ENCODE measurements at regions of chr17 and their contacts with region 1.

Region 1: GRCh38 chr17:17681187-17681848 is at the start of gene RAI1:
- DNase-seq: peak; percentile 64 to 87 (median 79)
- ATAC-seq: peak; percentile 82
- H3K4me3 ChIP-seq: peak within 1 kb of the TSS; percentile 62
- H3K4me3 Mint-ChIP-seq: peak within 1 kb of the TSS; percentile 84 to 92 (median 89)
- H3K27ac ChIP-seq: peak within 1 kb of the TSS; percentile 93
- H3K27ac Mint-ChIP-seq: peak within 1 kb of the TSS in 7 of 9 donors; percentile 59 to 90 (median 77)
- H3K4me1 ChIP-seq: peaks cover 7 to 17% of the 10 kb centered on the region in 2 donors
- H3K4me1 Mint-ChIP-seq: peaks cover 14 to 42% (median 37%) of the 10 kb centered on the region in 7 donors
- H3K27me3 ChIP-seq: no peaks in the 10 kb centered on the region
- H3K27me3 Mint-ChIP-seq: peaks cover 0 to 16% (median 0%) of the 10 kb centered on the region in 5 donors
- total RNA-seq, gene RAI1: 20.1 to 46.2 (median 23.6) TPM

Region 2: DNA sequence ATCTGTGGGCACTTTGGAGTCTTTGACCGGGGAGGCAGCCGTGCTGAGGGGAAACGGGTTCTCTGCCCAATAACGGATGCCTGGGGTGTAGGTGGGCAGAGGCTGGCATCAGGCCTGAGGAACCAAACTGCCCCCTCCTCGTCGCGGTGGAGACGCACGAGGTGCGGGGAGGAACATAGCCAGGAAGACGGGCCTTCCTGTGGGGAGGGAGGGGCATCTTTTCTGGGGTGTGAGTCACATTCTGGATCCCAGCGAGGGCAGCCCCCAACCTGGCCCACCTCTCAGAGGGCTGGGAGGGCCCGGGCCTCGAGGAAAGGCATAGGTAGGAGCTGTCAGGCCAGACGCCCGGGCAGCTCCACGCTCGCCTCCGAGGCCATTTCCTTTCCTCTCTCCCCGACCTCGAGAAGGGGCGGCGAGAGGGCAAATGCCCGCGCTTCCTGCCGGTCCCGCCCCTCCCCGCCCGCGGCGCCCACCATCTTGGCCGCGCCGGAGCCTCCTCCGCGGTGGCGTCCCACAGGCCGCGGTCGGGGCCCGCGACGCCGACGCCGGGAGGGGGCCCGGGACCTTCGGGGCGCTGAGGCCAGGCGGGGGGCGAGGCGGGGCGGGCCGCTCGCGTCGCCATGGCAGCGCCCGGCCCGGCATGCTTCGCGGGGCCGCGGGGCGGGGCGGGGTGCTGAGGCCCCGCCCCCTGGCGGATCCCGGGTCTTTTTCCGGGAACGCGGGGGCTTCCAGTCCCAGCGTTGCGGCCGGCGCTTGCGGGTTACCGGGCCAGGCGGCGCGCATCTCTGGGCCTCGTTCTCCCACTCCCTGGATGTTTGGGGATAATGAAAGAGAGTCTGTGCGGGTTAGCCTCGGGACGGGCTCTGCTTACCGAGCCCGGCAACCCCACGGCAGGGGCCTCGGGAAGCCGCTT is 13.1 kb after region 1 on chr17:
- CTCF ChIA-PET with region 1: interaction called, 14 read pairs
- POLR2A ChIA-PET with region 1: interaction called, 47 read pairs
- intact Hi-C with region 1: loop called (anchors 1 kb)
- DNase-seq: peak; percentile 65 to 83 (median 72)
- ATAC-seq: peak; percentile 87
- H3K4me3 ChIP-seq: peak overlapping the region; percentile 84
- H3K4me3 Mint-ChIP-seq: peak overlapping the region; percentile 88 to 96 (median 92)
- H3K27ac ChIP-seq: peak overlapping the region; percentile 93
- H3K27ac Mint-ChIP-seq: peak overlapping the region; percentile 95 to 99 (median 98)
- H3K4me1 ChIP-seq: peaks cover 15 to 51% of the 10 kb centered on the region in 2 donors
- H3K4me1 Mint-ChIP-seq: peaks cover 46 to 81% (median 72%) of the 10 kb centered on the region in 7 donors
- H3K27me3 ChIP-seq: no peaks in the 10 kb centered on the region
- H3K27me3 Mint-ChIP-seq: no peaks in the 10 kb centered on the region

Region 3: GRCh38 chr17:17729620-17730249 is 48.4 kb after region 1 on chr17:
- CTCF ChIA-PET with region 1: interaction called, 5 read pairs
- POLR2A ChIA-PET with region 1: interaction called, 3 read pairs
- intact Hi-C with region 1: loop called (anchors 1 to 5 kb)
- DNase-seq: peak in 8 of 9 donors; percentile 39 to 74 (median 63)
- ATAC-seq: peak; percentile 87
- H3K4me3 ChIP-seq: no peak overlapping the region
- H3K4me3 Mint-ChIP-seq: peak overlapping the region in 1 of 10 donors; percentile 8
- H3K27ac ChIP-seq: no peak overlapping the region
- H3K27ac Mint-ChIP-seq: peak overlapping the region in 7 of 9 donors; percentile 35 to 92 (median 68)
- H3K4me1 ChIP-seq: peaks cover 0 to 15% of the 10 kb centered on the region in 2 donors
- H3K4me1 Mint-ChIP-seq: peaks cover 11 to 40% (median 35%) of the 10 kb centered on the region in 7 donors
- H3K27me3 ChIP-seq: no peaks in the 10 kb centered on the region
- H3K27me3 Mint-ChIP-seq: peaks cover 0 to 5% (median 0%) of the 10 kb centered on the region in 5 donors

Region 4: GRCh38 chr17:17783116-17783824 is 102.0 kb after region 1 on chr17:
- CTCF ChIA-PET with region 1: interaction called, 3 read pairs
- POLR2A ChIA-PET with region 1: no interaction called
- intact Hi-C with region 1: loop called (anchors 1 to 2 kb)
- DNase-seq: peak; percentile 39 to 67 (median 63)
- ATAC-seq: peak; percentile 71
- H3K4me3 ChIP-seq: peak overlapping the region; percentile 72
- H3K4me3 Mint-ChIP-seq: peak overlapping the region; percentile 80 to 95 (median 91)
- H3K27ac ChIP-seq: peak overlapping the region; percentile 67
- H3K27ac Mint-ChIP-seq: peak overlapping the region in 7 of 9 donors; percentile 10 to 88 (median 74)
- H3K4me1 ChIP-seq: peaks cover 7 to 15% of the 10 kb centered on the region in 2 donors
- H3K4me1 Mint-ChIP-seq: peaks cover 15 to 32% (median 25%) of the 10 kb centered on the region in 7 donors
- H3K27me3 ChIP-seq: no peaks in the 10 kb centered on the region
- H3K27me3 Mint-ChIP-seq: peaks cover 0 to 29% (median 0%) of the 10 kb centered on the region in 5 donors

Region 5: DNA sequence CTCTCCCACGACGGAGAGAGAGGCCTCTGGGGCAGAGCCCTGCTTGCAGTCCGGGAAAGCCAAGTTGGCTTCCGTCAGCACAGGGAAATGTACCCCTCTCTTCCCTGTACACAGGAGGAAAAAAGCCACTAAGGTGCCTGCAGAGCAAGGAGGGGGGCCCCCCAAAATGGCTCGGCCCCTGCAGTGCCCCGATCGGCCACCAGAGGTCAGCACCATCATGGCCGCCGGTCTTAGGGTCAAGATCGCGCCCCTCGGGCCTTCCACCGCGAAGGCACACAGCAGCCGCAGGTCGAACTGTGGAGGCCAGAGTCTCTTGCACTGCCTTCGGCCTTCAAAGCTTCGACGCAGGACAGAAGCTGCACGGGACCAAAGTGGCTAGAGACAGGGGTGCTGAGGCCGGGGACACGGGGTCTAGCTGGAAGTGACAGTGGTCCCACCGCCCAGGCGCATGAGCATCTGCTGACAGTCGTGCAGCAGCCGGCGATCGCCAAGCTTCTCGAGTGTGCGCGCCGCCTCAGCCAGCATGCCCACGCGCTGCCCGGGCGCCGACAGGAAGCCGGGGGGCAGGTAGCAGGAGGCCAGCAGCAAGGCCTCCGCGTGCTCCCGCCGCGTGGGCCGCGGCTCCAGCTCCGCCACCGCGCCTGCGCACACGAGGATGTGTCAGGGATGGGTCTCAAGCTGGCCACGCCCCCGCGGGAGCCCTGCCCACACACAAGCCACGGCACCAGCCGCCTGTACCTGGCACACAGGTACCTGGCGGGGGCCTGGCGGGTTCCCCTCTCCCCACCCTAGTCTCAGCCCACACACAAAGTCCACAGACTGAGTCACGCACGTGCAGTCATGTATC is 131.1 kb after region 1 on chr17:
- CTCF ChIA-PET with region 1: interaction called, 5 read pairs
- POLR2A ChIA-PET with region 1: no interaction called
- intact Hi-C with region 1: loop called in 1 of 2 experiments (anchors 1 kb)
- DNase-seq: peak; percentile 33 to 79 (median 61)
- ATAC-seq: peak; percentile 73
- H3K4me3 ChIP-seq: no peak overlapping the region
- H3K4me3 Mint-ChIP-seq: no peak overlapping the region
- H3K27ac ChIP-seq: peak overlapping the region; percentile 39
- H3K27ac Mint-ChIP-seq: peak overlapping the region in 8 of 9 donors; percentile 23 to 66 (median 58)
- H3K4me1 ChIP-seq: peaks cover 6 to 9% of the 10 kb centered on the region in 2 donors
- H3K4me1 Mint-ChIP-seq: peaks cover 5 to 18% (median 9%) of the 10 kb centered on the region in 7 donors
- H3K27me3 ChIP-seq: no peaks in the 10 kb centered on the region
- H3K27me3 Mint-ChIP-seq: no peaks in the 10 kb centered on the region

Region 6: GRCh38 chr17:17859909-17860765 is 178.8 kb after region 1 on chr17:
- CTCF ChIA-PET with region 1: interaction called, 22 read pairs
- POLR2A ChIA-PET with region 1: interaction called, 3 read pairs
- intact Hi-C with region 1: loop called (anchors 1 kb)
- DNase-seq: peak; percentile 50 to 77 (median 68)
- ATAC-seq: peak; percentile 97
- H3K4me3 ChIP-seq: no peak overlapping the region
- H3K4me3 Mint-ChIP-seq: no peak overlapping the region
- H3K27ac ChIP-seq: no peak overlapping the region
- H3K27ac Mint-ChIP-seq: peak overlapping the region in 3 of 9 donors; percentile 46 to 70 (median 58)
- H3K4me1 ChIP-seq: peaks cover 0 to 28% of the 10 kb centered on the region in 2 donors
- H3K4me1 Mint-ChIP-seq: peaks cover 13 to 67% (median 52%) of the 10 kb centered on the region in 7 donors
- H3K27me3 ChIP-seq: no peaks in the 10 kb centered on the region
- H3K27me3 Mint-ChIP-seq: no peaks in the 10 kb centered on the region

Region 7: DNA sequence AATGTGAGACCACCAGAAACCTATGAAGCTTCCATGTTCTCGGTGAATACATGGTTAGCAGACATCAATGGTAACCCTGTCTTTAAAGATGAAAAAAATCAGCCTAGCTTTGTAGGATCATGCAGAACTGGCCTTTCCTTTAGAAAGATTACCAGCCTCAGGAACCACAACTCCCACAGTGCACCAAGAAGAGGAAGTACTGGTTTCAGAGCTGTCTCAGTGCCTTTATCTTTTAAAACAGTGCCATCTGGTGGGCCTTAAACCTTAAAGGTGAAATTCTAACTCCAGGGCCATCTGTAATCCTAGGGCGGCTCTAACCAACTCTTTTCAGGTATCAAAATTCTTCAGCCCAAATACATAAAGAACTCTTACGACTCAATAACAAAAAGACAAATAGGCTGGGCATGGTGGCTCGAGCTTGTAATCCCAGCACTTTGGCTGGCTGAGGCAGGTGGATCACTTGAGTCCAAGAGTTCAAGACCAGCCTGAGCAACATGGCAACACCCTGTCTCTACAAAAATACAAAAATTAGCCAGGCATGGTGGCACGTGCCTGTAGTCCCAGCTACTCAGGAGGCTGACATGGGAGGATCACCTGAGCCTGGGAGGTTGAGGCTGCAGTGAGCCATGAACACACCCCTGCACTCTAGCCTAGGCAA is 352.3 kb after region 1 on chr17:
- CTCF ChIA-PET with region 1: interaction called, 8 read pairs
- POLR2A ChIA-PET with region 1: interaction called, 3 read pairs
- intact Hi-C with region 1: loop called (anchors 1 kb)
- DNase-seq: peak in 8 of 9 donors; percentile 37 to 81 (median 70)
- ATAC-seq: peak; percentile 98
- H3K4me3 ChIP-seq: no peak overlapping the region
- H3K4me3 Mint-ChIP-seq: no peak overlapping the region
- H3K27ac ChIP-seq: no peak overlapping the region
- H3K27ac Mint-ChIP-seq: peak overlapping the region in 4 of 9 donors; percentile 3 to 79 (median 42)
- H3K4me1 ChIP-seq: peaks cover 17 to 21% of the 10 kb centered on the region in 2 donors
- H3K4me1 Mint-ChIP-seq: peaks cover 19 to 42% (median 31%) of the 10 kb centered on the region in 7 donors
- H3K27me3 ChIP-seq: no peaks in the 10 kb centered on the region
- H3K27me3 Mint-ChIP-seq: no peaks in the 10 kb centered on the region

Measured in naive thymus-derived CD4-positive, alpha-beta T cell (primary cell).